ENCODE measurements at regions of chr5 and their contacts with region 1.

Region 1: GRCh38 chr5:118863345-118863744 is 125.0 kb downstream of the DTWD2 start:
- DNase-seq: no peak
- H3K4me3 ChIP-seq: no peak overlapping the region
- H3K27ac ChIP-seq: no peak overlapping the region
- H3K4me1 ChIP-seq: no peaks in the 10 kb centered on the region
- H3K27me3 ChIP-seq: no peaks in the 10 kb centered on the region
- CTCF ChIP-seq: no peak
- EP300 ChIP-seq: no peak
- POLR2A ChIP-seq: no peak

Region 2: DNA sequence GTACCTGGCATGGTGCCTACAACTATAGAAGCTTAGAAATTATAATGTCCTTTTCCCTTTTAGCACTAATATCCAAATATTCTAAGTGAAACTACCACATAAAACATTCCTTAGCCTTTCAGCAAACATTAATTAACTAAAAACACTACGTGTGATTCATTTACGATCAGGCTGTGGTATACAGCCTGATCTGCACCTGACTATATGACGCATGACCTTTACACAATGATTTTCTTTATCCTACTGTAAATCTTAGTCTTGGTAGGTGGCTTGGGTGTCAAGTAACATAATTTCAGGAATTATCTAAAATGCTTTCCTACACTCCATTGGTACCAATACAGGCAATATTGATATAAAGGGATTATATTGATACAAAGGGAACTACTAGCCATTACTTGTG is 561.6 kb before region 1 on chr5:
- intact Hi-C with region 1: loop called in 1 of 4 experiments (anchors 10 kb)
- DNase-seq: no peak
- H3K4me3 ChIP-seq: no peak overlapping the region
- H3K27ac ChIP-seq: no peak overlapping the region
- H3K4me1 ChIP-seq: no peaks in the 10 kb centered on the region
- H3K27me3 ChIP-seq: no peaks in the 10 kb centered on the region
- CTCF ChIP-seq: no peak
- EP300 ChIP-seq: no peak
- POLR2A ChIP-seq: no peak

Region 3: GRCh38 chr5:118937393-118938061 is 74.2 kb after region 1 on chr5:
- intact Hi-C with region 1: no loop called
- DNase-seq: no peak
- H3K4me3 ChIP-seq: no peak overlapping the region
- H3K27ac ChIP-seq: no peak overlapping the region
- H3K4me1 ChIP-seq: no peaks in the 10 kb centered on the region
- H3K27me3 ChIP-seq: no peaks in the 10 kb centered on the region
- CTCF ChIP-seq: no peak
- EP300 ChIP-seq: no peak
- POLR2A ChIP-seq: no peak

Region 4: GRCh38 chr5:119322948-119323537 is 459.7 kb after region 1 on chr5:
- intact Hi-C with region 1: no loop called
- DNase-seq: no peak
- H3K4me3 ChIP-seq: no peak overlapping the region
- H3K27ac ChIP-seq: no peak overlapping the region
- H3K4me1 ChIP-seq: no peaks in the 10 kb centered on the region
- H3K27me3 ChIP-seq: no peaks in the 10 kb centered on the region
- CTCF ChIP-seq: no peak
- EP300 ChIP-seq: no peak
- POLR2A ChIP-seq: no peak

Measured in ovary (tissue), 10 donors.